ENCODE measurements at regions of chr2 and their contacts with region 1.

Region 1: DNA sequence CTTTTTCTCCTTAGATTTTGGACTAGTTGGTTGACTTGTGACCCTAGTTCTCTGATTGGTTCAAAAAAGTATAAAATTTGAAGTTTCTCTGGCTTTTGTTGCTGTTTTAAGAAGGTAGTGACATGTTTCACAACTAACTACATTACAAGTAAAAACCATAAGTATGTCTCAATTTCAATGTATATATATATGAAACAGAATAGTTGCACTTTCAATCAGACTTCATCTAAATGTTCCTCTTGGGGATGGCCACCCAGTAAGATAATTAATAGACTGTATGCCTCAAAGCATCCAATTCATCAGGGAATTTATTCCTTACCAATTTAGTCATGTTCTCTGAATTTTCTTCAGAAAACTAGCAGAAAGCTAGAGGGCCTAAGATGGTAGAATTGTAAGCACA is 259.7 kb downstream of the RPRM start:
- DNase-seq: no peak
- H3K4me3 Mint-ChIP-seq: no peak overlapping the region
- H3K27ac Mint-ChIP-seq: no peak overlapping the region
- H3K4me1 Mint-ChIP-seq: no peaks in the 10 kb centered on the region
- H3K27me3 Mint-ChIP-seq: no peaks in the 10 kb centered on the region

Region 2: GRCh38 chr2:153235516-153235915 is 16.7 kb after region 1 on chr2:
- CTCF ChIA-PET with region 1: no interaction called
- POLR2A ChIA-PET with region 1: no interaction called
- intact Hi-C with region 1: loop called (anchors 1 kb)
- DNase-seq: peak; percentile 54
- H3K4me3 Mint-ChIP-seq: no peak overlapping the region
- H3K27ac Mint-ChIP-seq: peak overlapping the region; percentile 6
- H3K4me1 Mint-ChIP-seq: peaks cover 14% of the 10 kb centered on the region
- H3K27me3 Mint-ChIP-seq: no peaks in the 10 kb centered on the region

Measured in activated CD4-positive, alpha-beta memory T cell treated with anti-CD3 and anti-CD28 coated beads for 36 hours (primary cell).